Common myeloid progenitor, CD34-positive (primary cell): ENCODE measurements at regions of chr19 and their contacts with region 1.

Region 1: DNA sequence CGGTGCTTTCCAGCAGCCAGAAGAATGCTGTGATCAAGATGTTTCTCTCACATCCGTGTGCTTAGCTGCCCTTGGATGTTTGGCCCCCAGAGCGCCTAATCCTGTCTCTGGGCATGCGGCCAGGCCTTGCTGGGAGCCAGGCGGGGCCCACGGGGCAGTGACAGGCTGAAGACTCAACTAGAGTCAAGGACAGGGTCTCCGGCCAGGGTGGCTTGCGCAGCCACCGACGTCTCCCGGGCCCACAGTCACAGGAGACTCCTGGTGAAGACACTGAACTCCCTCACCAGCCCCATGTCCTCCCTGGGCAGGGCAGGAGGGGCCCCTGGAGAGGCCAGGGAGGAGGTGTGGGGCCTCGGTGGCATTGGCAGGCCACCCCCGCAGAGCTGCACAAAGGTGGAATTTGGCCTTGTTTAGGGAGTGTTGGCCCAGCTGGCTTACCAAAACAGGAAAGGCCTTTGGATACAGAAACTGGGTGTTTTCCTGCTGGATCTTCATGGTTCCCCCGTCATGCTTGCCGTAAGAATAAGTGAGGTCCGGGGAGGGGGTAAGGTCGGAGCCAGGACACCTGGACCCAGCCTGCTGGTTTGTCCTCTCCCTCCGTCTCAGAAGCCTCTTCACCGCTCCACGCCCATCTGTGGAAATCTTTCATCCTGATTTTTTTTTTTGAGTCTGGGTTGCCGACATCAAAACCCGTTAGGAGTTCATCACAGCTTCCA is 10.0 kb upstream of the NDUFS7 start:
- DNase-seq: no peak
- H3K4me3 ChIP-seq: no peak overlapping the region
- H3K27ac ChIP-seq: no peak overlapping the region
- H3K4me1 ChIP-seq: no peaks in the 10 kb centered on the region
- H3K27me3 ChIP-seq: no peaks in the 10 kb centered on the region

Region 2: GRCh38 chr19:1279782-1280341 is 93.8 kb before region 1 on chr19:
- CTCF ChIA-PET with region 1: interaction called, 60 read pairs
- POLR2A ChIA-PET with region 1: no interaction called
- DNase-seq: peak; percentile 83 to 90 (median 84)
- H3K4me3 ChIP-seq: no peak overlapping the region
- H3K27ac ChIP-seq: no peak overlapping the region
- H3K4me1 ChIP-seq: peaks cover 0 to 20% (median 17%) of the 10 kb centered on the region in 4 experiments
- H3K27me3 ChIP-seq: peaks cover 0 to 24% (median 13%) of the 10 kb centered on the region in 5 experiments

Region 3: DNA sequence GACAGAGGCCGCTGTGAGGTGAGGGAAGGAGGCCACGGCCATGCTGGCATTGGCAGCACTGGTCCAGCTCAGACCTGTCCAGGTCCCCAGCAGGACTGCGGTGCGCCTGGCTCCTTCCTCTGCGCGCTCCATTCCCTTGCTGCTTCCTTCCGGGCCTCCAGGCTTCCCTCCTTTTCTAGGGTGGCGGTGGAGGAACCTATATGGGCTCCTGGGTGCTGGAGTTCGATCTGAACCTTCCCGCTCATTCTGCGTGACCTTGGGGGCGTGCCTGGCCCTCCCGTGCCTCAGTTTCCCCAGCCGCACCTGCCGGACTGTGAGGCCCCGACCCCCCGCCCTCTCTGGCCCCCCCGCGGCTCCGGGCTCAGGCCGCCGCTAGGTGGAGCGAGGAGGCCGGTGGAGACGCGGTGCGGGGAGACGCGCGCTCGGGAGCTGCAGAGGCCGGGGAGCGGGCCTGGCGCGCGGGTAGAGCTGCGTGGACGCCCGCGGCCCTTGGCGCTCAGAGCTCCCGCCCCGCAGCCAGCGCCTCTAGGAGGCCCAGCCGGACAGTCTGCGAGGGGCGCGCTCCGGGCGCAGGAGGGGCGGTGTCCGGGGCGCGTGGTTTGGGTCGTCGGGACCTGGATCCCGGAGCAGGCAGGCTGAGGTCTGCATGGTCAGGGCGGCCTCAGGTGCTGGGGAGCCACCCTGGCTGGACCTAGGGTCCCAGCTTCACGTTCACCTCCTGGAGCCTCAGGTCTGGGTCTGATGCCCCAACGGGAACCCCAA is 58.0 kb before region 1 on chr19:
- CTCF ChIA-PET with region 1: interaction called, 33 read pairs
- POLR2A ChIA-PET with region 1: no interaction called
- DNase-seq: peak; percentile 27 to 31 (median 28)
- H3K4me3 ChIP-seq: peak overlapping the region in 2 of 7 experiments; percentile 55 to 59
- H3K27ac ChIP-seq: no peak overlapping the region
- H3K4me1 ChIP-seq: peaks cover 0 to 9% (median 7%) of the 10 kb centered on the region in 4 experiments
- H3K27me3 ChIP-seq: peaks cover 5 to 37% (median 13%) of the 10 kb centered on the region in 5 experiments

Region 4: GRCh38 chr19:1325568-1326294 is 48.0 kb before region 1 on chr19:
- CTCF ChIA-PET with region 1: interaction called, 10 read pairs
- POLR2A ChIA-PET with region 1: no interaction called
- DNase-seq: no peak
- H3K4me3 ChIP-seq: peak overlapping the region in 3 of 7 experiments; percentile 26 to 74 (median 62)
- H3K27ac ChIP-seq: no peak overlapping the region
- H3K4me1 ChIP-seq: peaks cover 0 to 12% (median 10%) of the 10 kb centered on the region in 4 experiments
- H3K27me3 ChIP-seq: peaks cover 0 to 33% (median 16%) of the 10 kb centered on the region in 5 experiments